ENCODE measurements at regions of chr10 and their contacts with region 1.

Region 1: GRCh38 chr10:71756311-71757191 is 16.8 kb downstream of the VSIR start:
- DNase-seq: peak in 2 of 5 donors; percentile 68 to 83
- H3K4me3 ChIP-seq: peak overlapping the region; percentile 23
- H3K4me3 Mint-ChIP-seq: peak overlapping the region; percentile 56 to 76 (median 68)
- H3K27ac ChIP-seq: no peak overlapping the region
- H3K27ac Mint-ChIP-seq: peak overlapping the region; percentile 82 to 98 (median 93)
- H3K4me1 ChIP-seq: peaks cover 93% of the 10 kb centered on the region
- H3K4me1 Mint-ChIP-seq: peaks cover 74 to 89% (median 82%) of the 10 kb centered on the region in 3 donors
- H3K27me3 ChIP-seq: no peaks in the 10 kb centered on the region
- H3K27me3 Mint-ChIP-seq: no peaks in the 10 kb centered on the region

Region 2: GRCh38 chr10:71740069-71740468 is 16.5 kb before region 1 on chr10:
- CTCF ChIA-PET with region 1: interaction called, 10 read pairs
- POLR2A ChIA-PET with region 1: interaction called, 5 read pairs
- DNase-seq: no peak
- H3K4me3 ChIP-seq: no peak overlapping the region
- H3K4me3 Mint-ChIP-seq: peak overlapping the region in 5 of 7 donors; percentile 15 to 70 (median 51)
- H3K27ac ChIP-seq: no peak overlapping the region
- H3K27ac Mint-ChIP-seq: peak overlapping the region; percentile 76 to 99 (median 96)
- H3K4me1 ChIP-seq: peaks cover 100% of the 10 kb centered on the region
- H3K4me1 Mint-ChIP-seq: peaks cover 93 to 100% (median 99%) of the 10 kb centered on the region in 3 donors
- H3K27me3 ChIP-seq: no peaks in the 10 kb centered on the region
- H3K27me3 Mint-ChIP-seq: peaks cover 0 to 2% of the 10 kb centered on the region in 2 donors